ENCODE measurements at regions of chr1 and their contacts with region 1.

Region 1: GRCh38 chr1:113630068-113630975 is 129.0 kb downstream of the PHTF1 start:
- DNase-seq: no peak
- ATAC-seq: no peak
- H3K4me3 ChIP-seq: no peak overlapping the region
- H3K27ac ChIP-seq: no peak overlapping the region
- H3K4me1 ChIP-seq: no peaks in the 10 kb centered on the region
- H3K27me3 ChIP-seq: no peaks in the 10 kb centered on the region
- CTCF ChIP-seq: no peak

Region 2: GRCh38 chr1:113508364-113509164 is 121.8 kb before region 1 on chr1:
- intact Hi-C with region 1: no loop called
- DNase-seq: no peak
- ATAC-seq: no peak
- H3K4me3 ChIP-seq: no peak overlapping the region
- H3K27ac ChIP-seq: no peak overlapping the region
- H3K4me1 ChIP-seq: peaks cover 0 to 4% (median 0%) of the 10 kb centered on the region in 9 donors
- H3K27me3 ChIP-seq: no peaks in the 10 kb centered on the region
- CTCF ChIP-seq: no peak

Region 3: DNA sequence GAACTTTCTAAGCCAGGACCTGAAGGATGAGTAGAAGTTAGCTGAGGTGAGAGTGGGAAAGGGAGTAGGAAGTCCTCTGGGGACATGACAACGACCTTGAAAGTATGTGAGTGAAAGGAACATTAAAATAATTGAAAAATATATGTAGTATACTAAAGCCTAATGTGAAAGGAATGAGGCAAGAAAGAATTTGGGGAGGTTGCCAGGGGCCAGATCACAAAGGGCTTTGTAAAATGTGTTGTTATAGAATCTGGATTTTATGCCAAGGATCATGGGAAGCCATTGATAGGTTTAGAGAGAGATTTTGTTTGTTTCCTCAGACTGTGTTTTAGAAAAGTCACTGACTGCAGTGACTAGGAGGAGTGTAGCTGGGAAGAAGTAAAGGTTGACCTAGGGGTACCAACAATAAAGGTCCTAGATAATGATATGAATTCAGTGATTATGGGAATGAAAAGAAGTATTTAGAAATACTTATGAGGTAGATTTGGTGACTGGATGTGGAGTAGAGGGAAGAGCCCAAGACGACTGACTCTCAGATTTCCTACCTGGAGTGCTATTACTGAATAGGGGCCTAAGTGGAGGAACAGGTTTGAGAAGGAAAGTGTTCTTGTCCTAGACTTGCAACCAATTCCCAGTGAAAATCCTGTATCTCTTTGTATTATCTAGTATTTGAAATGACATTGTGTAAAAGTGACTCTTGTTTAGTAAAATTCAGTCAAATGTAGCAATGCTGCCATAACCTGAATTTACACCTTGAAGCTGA is 50.9 kb before region 1 on chr1:
- intact Hi-C with region 1: loop called in 1 of 10 experiments (anchors 10 kb)
- DNase-seq: no peak
- ATAC-seq: no peak
- H3K4me3 ChIP-seq: no peak overlapping the region
- H3K27ac ChIP-seq: no peak overlapping the region
- H3K4me1 ChIP-seq: no peaks in the 10 kb centered on the region
- H3K27me3 ChIP-seq: no peaks in the 10 kb centered on the region
- CTCF ChIP-seq: no peak

Region 4: DNA sequence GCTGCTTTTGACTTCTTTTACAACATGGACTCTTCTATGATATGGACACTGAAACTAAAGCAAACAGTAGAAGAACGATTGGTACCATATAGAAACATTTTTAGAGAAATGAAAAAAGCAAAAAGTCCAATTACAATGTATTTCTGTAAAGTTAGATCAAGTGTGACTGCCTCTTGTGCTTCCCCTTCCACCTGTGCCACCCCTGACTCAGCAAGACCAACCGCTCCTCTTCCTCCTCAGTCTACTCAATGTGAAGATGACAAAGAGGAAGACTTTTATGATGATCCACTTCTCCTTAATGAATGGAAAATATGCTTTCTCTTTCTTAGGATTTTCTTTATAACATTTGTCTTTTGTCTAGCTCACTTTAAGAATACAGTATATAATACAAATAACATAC is 62.0 kb after region 1 on chr1:
- intact Hi-C with region 1: no loop called
- DNase-seq: no peak
- ATAC-seq: no peak
- H3K4me3 ChIP-seq: no peak overlapping the region
- H3K27ac ChIP-seq: no peak overlapping the region
- H3K4me1 ChIP-seq: no peaks in the 10 kb centered on the region
- H3K27me3 ChIP-seq: no peaks in the 10 kb centered on the region
- CTCF ChIP-seq: no peak

Region 5: DNA sequence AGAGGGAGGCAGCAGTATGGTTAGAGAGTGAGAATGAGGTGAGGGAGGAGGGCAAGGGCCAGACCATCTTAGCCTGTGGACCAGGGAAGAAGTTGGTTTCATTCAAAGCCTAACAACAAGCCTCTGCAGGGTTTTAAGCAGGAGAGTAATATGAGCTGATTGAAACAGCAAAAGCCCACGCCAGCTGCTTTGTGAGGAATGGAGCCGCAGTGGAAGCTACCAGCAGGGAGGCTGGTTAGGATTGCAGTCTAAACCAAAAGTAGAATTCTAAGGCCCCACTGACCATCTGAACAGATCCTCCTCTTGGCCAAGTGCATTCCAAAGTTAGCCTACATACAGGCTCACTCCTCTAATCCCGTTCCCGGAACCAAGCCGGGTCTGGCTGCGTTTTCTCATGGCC is 393.7 kb after region 1 on chr1:
- intact Hi-C with region 1: no loop called
- DNase-seq: no peak
- ATAC-seq: no peak
- H3K4me3 ChIP-seq: no peak overlapping the region
- H3K27ac ChIP-seq: no peak overlapping the region
- H3K4me1 ChIP-seq: no peaks in the 10 kb centered on the region
- H3K27me3 ChIP-seq: no peaks in the 10 kb centered on the region
- CTCF ChIP-seq: no peak

Measured in heart right ventricle (tissue), 16 donors.